SK-N-SH (cell line): ENCODE measurements at regions of chr6 and their contacts with region 1.

Region 1: GRCh38 chr6:50816115-50816675 is 2.5 kb upstream of the TFAP2B start:
- DNase-seq: peak; percentile 63
- H3K4me3 ChIP-seq: peak overlapping the region; percentile 63
- H3K27ac ChIP-seq: peak overlapping the region in 1 of 2 experiments; percentile 99; a peak in 2 of 4 replicates
- H3K4me1 ChIP-seq: peaks cover 0 to 3% of the 10 kb centered on the region in 2 experiments; a peak in 1 of 4 replicates
- H3K27me3 ChIP-seq: peaks cover 38% of the 10 kb centered on the region
- CTCF ChIP-seq: peak; percentile 93
- EP300 ChIP-seq: no peak
- RAD21 ChIP-seq: peak; percentile 96

Region 2: DNA sequence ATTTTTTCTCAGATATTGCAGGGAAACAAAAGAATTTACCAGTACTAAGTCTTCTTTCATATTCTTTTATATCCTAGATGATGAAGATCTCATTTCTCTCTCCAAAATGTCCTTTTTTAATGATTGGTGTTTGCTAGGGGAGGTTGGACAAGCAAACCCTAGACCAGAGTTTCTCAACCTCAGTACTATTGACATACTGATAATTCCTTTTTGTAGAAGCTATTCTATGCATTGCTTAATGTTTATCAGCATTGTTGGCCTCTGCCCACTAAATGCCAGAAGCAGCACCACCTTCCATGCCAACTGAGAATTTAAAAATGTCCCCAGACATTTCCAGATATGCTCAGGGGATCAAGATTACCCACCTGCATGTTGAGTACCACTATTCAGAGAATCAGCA is 11.9 kb before region 1 on chr6:
- CTCF ChIA-PET with region 1: no interaction called
- POLR2A ChIA-PET with region 1: no interaction called
- DNase-seq: no peak
- H3K4me3 ChIP-seq: no peak overlapping the region
- H3K27ac ChIP-seq: no peak overlapping the region
- H3K4me1 ChIP-seq: no peaks in the 10 kb centered on the region; a peak in 2 of 4 replicates
- H3K27me3 ChIP-seq: no peaks in the 10 kb centered on the region
- CTCF ChIP-seq: no peak
- EP300 ChIP-seq: no peak
- RAD21 ChIP-seq: no peak

Region 3: DNA sequence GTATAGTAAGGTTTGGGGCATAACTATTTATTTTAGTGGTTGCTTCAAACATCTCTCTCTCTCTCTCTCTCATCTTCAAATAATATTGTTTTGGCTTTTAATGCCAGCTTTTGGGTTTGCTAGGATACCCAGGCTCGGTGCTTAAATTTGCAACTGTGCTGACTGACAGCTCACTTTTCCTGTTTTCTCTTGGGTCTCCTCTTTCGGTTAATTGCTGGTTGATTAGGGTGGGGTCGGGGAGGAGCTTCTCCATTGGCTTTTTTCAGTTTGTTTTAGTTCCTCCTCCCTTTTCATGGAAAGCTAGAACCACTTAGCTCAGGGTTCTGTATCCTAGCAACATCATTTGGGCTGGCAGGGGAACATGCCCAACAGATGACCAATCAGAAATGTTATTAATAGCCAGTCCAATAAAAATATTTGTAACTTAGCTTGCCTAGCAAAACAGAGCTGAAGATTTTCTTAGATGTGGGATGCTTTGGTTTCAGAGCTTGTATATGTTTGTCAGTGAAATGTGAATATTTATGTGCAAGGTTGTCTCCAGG is 13.8 kb after region 1 on chr6:
- CTCF ChIA-PET with region 1: interaction called, 4 read pairs
- POLR2A ChIA-PET with region 1: interaction called, 57 read pairs
- DNase-seq: no peak
- H3K4me3 ChIP-seq: no peak overlapping the region; a peak in 1 of 4 replicates
- H3K27ac ChIP-seq: peak overlapping the region in 1 of 2 experiments; percentile 99; a peak in 2 of 4 replicates
- H3K4me1 ChIP-seq: peaks cover 0 to 51% of the 10 kb centered on the region in 2 experiments; a peak in 2 of 4 replicates
- H3K27me3 ChIP-seq: peaks cover 20% of the 10 kb centered on the region
- CTCF ChIP-seq: no peak
- EP300 ChIP-seq: no peak
- RAD21 ChIP-seq: no peak

Region 4: GRCh38 chr6:50905297-50905696 is 89.1 kb after region 1 on chr6:
- CTCF ChIA-PET with region 1: no interaction called
- POLR2A ChIA-PET with region 1: no interaction called
- DNase-seq: no peak
- H3K4me3 ChIP-seq: no peak overlapping the region
- H3K27ac ChIP-seq: no peak overlapping the region
- H3K4me1 ChIP-seq: no peaks in the 10 kb centered on the region
- H3K27me3 ChIP-seq: no peaks in the 10 kb centered on the region
- CTCF ChIP-seq: no peak
- EP300 ChIP-seq: no peak
- RAD21 ChIP-seq: no peak

Region 5: GRCh38 chr6:51553246-51554015 is 737.2 kb after region 1 on chr6:
- CTCF ChIA-PET with region 1: interaction called, 3 read pairs
- POLR2A ChIA-PET with region 1: interaction called, 21 read pairs
- DNase-seq: peak; percentile 44
- H3K4me3 ChIP-seq: no peak overlapping the region
- H3K27ac ChIP-seq: peak overlapping the region in 1 of 2 experiments; percentile 99; a peak in 2 of 4 replicates
- H3K4me1 ChIP-seq: peaks cover 0 to 31% of the 10 kb centered on the region in 2 experiments; a peak in 2 of 4 replicates
- H3K27me3 ChIP-seq: no peaks in the 10 kb centered on the region
- CTCF ChIP-seq: no peak
- EP300 ChIP-seq: peak in 1 of 2 experiments; percentile 98; a peak in 2 of 4 replicates
- RAD21 ChIP-seq: peak; percentile 42

Region 6: GRCh38 chr6:51578994-51579393 is 762.8 kb after region 1 on chr6:
- CTCF ChIA-PET with region 1: interaction called, 3 read pairs
- POLR2A ChIA-PET with region 1: interaction called, 12 read pairs
- DNase-seq: peak; percentile 66
- H3K4me3 ChIP-seq: no peak overlapping the region
- H3K27ac ChIP-seq: peak overlapping the region in 1 of 2 experiments; percentile 100; a peak in 2 of 4 replicates
- H3K4me1 ChIP-seq: peaks cover 0 to 8% of the 10 kb centered on the region in 2 experiments; a peak in 1 of 4 replicates
- H3K27me3 ChIP-seq: no peaks in the 10 kb centered on the region
- CTCF ChIP-seq: no peak
- EP300 ChIP-seq: peak in 1 of 2 experiments; percentile 98; a peak in 2 of 4 replicates
- RAD21 ChIP-seq: peak; percentile 40

Region 7: DNA sequence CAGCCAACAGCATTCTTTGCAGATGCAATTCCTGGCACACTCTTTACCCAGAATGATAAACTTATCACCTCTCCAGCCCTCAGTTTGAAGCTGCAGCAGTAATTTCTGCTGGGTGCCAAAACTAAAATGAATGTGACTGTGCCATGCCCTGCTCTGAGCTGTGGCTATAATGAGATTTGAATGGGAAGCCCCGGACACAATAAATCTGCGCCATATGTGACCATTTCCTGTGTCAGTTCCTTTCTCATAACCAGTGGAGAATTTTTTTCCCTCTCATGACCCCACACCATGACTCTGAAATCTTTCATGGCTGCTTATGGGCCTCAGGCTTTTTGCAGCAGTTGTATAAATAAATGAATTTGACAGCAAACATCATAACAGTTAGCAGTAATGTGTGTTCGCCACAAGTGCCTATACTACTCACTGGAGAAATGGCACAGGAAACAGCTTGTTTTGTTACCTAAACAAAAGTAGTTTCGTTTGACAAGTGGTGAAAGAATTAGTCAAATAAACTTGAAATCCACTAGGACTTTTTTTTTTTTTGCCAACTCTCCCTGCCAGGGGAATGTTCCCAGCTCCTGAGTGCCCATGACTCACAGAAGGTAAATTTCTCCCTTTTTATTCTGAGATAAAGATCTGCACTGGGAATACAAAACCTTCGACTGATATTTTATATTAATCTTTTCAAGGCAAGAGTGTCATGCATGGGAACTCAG is 862.9 kb after region 1 on chr6:
- CTCF ChIA-PET with region 1: interaction called, 4 read pairs
- POLR2A ChIA-PET with region 1: interaction called, 10 read pairs
- DNase-seq: peak; percentile 16
- H3K4me3 ChIP-seq: no peak overlapping the region
- H3K27ac ChIP-seq: peak overlapping the region in 1 of 2 experiments; percentile 99; a peak in 2 of 4 replicates
- H3K4me1 ChIP-seq: peaks cover 0 to 40% of the 10 kb centered on the region in 2 experiments; a peak in 2 of 4 replicates
- H3K27me3 ChIP-seq: no peaks in the 10 kb centered on the region
- CTCF ChIP-seq: no peak
- EP300 ChIP-seq: peak in 1 of 2 experiments; percentile 98; a peak in 2 of 4 replicates
- RAD21 ChIP-seq: peak; percentile 45

Region 8: DNA sequence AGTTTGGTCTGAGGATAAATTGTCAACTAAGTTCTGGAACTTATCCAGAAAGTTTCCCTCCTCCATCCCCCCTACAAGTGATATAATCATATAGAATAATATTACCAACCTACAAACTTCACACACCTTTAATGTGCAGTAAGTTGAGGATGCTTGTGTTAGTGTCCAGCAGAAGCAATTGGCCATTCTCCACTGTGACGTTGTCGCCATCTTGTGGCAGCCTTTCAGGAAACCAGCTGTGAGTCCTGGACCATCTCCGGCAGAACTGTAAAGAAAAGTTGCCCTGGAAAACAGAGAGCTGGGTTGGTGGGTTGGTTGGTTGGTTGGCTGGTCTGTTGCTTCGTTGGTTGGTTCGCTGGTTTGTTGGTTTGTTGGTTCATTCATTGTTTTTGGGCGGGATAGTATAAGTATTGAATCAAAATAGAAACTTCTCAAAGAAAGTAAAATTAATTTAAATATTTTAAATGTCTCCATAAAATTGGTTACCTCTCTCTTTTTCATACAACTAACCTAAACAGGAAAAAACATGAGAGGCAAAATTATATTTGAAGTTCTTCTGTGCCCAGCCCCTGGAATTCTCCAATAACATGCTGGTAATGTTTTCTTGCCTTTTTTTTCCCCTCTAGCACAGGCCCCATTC is 1143.7 kb after region 1 on chr6:
- CTCF ChIA-PET with region 1: interaction called, 22 read pairs
- POLR2A ChIA-PET with region 1: no interaction called
- DNase-seq: peak; percentile 34
- H3K4me3 ChIP-seq: no peak overlapping the region; a peak in 1 of 4 replicates
- H3K27ac ChIP-seq: peak overlapping the region in 1 of 2 experiments; percentile 91; a peak in 2 of 4 replicates
- H3K4me1 ChIP-seq: peaks cover 0 to 2% of the 10 kb centered on the region in 2 experiments; a peak in 1 of 4 replicates
- H3K27me3 ChIP-seq: no peaks in the 10 kb centered on the region
- CTCF ChIP-seq: peak; percentile 83
- EP300 ChIP-seq: no peak
- RAD21 ChIP-seq: peak; percentile 99

Region 9: DNA sequence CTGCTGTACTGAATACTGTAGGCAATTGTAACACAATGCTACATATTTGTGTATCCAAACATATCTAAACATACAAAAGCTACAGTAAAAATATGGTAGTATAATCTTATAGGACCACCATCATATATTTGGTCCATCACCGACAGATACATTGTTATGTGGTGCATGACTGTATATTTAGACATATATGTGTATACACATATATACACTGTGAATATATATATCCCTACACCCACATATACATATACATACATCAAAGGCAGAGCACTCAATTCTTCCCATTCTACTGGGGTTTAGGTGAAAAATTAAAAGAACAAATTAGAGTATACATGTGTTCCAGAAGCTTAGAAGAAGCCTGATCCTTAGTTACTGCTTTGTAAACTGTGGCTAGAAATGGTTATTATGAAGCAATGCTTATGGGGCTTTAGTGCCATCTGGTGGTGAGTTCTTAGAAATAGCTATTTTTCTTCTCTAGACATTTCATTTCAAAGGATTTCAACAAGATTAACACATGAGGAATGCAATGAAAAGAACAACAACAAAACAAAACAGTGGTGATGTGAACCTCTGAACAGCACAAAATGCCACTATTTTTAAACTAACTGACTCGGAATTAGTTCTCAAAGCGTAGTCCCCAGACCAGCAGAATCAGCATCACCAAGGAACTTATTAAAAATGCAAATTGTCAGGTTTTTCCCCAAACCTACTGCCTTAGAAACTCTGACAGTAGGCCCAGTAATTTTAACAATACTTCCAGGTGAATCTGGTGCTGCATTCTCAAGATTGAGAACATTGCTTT is 1233.3 kb after region 1 on chr6:
- CTCF ChIA-PET with region 1: interaction called, 10 read pairs
- POLR2A ChIA-PET with region 1: interaction called, 3 read pairs
- DNase-seq: peak; percentile 36
- H3K4me3 ChIP-seq: no peak overlapping the region
- H3K27ac ChIP-seq: no peak overlapping the region
- H3K4me1 ChIP-seq: no peaks in the 10 kb centered on the region
- H3K27me3 ChIP-seq: no peaks in the 10 kb centered on the region
- CTCF ChIP-seq: peak; percentile 84
- EP300 ChIP-seq: no peak
- RAD21 ChIP-seq: peak; percentile 83